Activated CD4-positive, alpha-beta T cell treated with anti-CD3 and anti-CD28 coated beads, Interleukin-2, amount 10 ng/mL, durations not matched to agents 24 days and 14 days (primary cell): ENCODE measurements at regions of chr13 and their contacts with region 1.

Region 1: GRCh38 chr13:24512197-24512907 is at the start of gene PARP4:
- DNase-seq: peak; percentile 93
- H3K4me3 Mint-ChIP-seq: peak within 1 kb of the TSS; percentile 90
- H3K27ac Mint-ChIP-seq: peak within 1 kb of the TSS; percentile 98
- H3K4me1 Mint-ChIP-seq: peaks cover 30% of the 10 kb centered on the region
- H3K27me3 Mint-ChIP-seq: peaks cover 3% of the 10 kb centered on the region
- total RNA-seq, gene PARP4: 33.0 and 34.8 TPM in 2 replicates

Region 2: GRCh38 chr13:24097064-24097463 is 415.3 kb before region 1 on chr13:
- intact Hi-C with region 1: loop called (anchors 1 kb)
- DNase-seq: peak; percentile 74
- H3K4me3 Mint-ChIP-seq: peak overlapping the region; percentile 71
- H3K27ac Mint-ChIP-seq: peak overlapping the region; percentile 92
- H3K4me1 Mint-ChIP-seq: peaks cover 17% of the 10 kb centered on the region
- H3K27me3 Mint-ChIP-seq: peaks cover 29% of the 10 kb centered on the region

Region 3: GRCh38 chr13:24254146-24254841 is 258.1 kb before region 1 on chr13:
- intact Hi-C with region 1: loop called (anchors 5 kb)
- DNase-seq: peak; percentile 85
- H3K4me3 Mint-ChIP-seq: peak overlapping the region; percentile 81
- H3K27ac Mint-ChIP-seq: peak overlapping the region; percentile 97
- H3K4me1 Mint-ChIP-seq: peaks cover 66% of the 10 kb centered on the region
- H3K27me3 Mint-ChIP-seq: no peaks in the 10 kb centered on the region

Region 4: DNA sequence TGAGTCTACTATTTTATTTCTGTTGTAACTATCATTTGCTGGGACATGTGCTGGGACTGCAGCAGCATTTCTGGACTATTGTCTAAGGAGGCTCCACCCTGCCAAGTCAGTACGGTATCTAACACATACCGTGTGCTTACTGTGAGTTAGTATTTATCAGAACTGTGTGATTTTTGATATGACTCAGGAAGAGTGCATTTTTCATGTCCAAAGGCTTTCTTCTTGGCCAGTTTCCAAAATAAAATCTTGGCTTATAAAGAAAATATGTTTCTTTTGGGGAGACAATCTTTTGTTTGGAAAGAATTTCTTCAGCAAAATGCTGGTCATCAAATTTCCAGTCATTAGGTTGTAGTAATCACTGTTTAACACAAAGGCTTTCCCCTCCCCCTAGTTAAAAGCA is 11.4 kb before region 1 on chr13:
- intact Hi-C with region 1: loop called (anchors 1 kb)
- DNase-seq: no peak
- H3K4me3 Mint-ChIP-seq: no peak overlapping the region
- H3K27ac Mint-ChIP-seq: no peak overlapping the region
- H3K4me1 Mint-ChIP-seq: peaks cover 8% of the 10 kb centered on the region
- H3K27me3 Mint-ChIP-seq: no peaks in the 10 kb centered on the region

Region 5: DNA sequence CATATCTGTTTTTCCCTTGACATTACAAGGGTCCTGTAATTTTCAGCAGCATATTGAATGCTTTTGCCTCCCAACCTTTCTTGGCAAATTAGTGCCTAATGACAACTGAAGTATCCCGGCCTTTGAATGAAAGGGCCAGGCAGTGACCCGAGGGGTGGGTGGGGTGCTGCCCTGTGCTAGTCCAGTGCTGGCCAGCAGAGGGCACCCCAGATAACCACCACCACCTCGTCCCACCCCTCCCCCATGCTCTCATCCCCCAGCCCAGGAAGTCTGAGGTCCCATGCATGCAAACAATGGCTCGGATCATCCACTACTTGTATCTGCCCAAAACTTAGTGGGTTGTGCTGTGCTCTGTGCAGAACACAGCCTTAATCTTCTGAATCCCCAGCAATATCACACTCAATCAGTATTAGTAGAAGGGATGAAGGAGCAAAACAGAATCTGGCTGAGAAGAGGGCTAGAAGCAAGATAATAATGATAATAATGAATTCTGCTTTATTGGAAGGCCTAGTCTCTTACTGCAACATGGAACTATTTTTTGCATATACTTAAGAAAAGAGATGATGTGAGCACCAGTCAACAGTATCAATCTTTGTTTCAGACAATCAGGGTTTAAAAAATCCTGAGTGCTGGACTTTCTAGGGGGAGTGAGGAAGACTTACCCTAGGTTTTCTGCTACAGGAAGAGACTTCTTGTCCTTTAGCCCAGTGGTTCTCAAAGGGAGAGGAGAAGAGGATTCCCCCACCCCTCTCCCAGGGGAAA is 171.7 kb after region 1 on chr13:
- intact Hi-C with region 1: loop called (anchors 5 kb)
- DNase-seq: peak; percentile 84
- H3K4me3 Mint-ChIP-seq: no peak overlapping the region
- H3K27ac Mint-ChIP-seq: peak overlapping the region; percentile 66
- H3K4me1 Mint-ChIP-seq: peaks cover 31% of the 10 kb centered on the region
- H3K27me3 Mint-ChIP-seq: peaks cover 58% of the 10 kb centered on the region